ENCODE measurements at regions of chr1 and their contacts with region 1.

Region 1: GRCh38 chr1:155729031-155729898 is 40.4 kb downstream of the DAP3 start:
- DNase-seq: peak; percentile 10
- H3K4me3 ChIP-seq: no peak overlapping the region
- CTCF ChIP-seq: peak; percentile 56

Region 2: GRCh38 chr1:155741908-155742307 is 12.6 kb after region 1 on chr1:
- CTCF ChIA-PET with region 1: interaction called, 12 read pairs
- POLR2A ChIA-PET with region 1: no interaction called
- DNase-seq: no peak
- H3K4me3 ChIP-seq: no peak overlapping the region
- CTCF ChIP-seq: no peak